ENCODE measurements at regions of chr20 and their contacts with region 1.

Region 1: DNA sequence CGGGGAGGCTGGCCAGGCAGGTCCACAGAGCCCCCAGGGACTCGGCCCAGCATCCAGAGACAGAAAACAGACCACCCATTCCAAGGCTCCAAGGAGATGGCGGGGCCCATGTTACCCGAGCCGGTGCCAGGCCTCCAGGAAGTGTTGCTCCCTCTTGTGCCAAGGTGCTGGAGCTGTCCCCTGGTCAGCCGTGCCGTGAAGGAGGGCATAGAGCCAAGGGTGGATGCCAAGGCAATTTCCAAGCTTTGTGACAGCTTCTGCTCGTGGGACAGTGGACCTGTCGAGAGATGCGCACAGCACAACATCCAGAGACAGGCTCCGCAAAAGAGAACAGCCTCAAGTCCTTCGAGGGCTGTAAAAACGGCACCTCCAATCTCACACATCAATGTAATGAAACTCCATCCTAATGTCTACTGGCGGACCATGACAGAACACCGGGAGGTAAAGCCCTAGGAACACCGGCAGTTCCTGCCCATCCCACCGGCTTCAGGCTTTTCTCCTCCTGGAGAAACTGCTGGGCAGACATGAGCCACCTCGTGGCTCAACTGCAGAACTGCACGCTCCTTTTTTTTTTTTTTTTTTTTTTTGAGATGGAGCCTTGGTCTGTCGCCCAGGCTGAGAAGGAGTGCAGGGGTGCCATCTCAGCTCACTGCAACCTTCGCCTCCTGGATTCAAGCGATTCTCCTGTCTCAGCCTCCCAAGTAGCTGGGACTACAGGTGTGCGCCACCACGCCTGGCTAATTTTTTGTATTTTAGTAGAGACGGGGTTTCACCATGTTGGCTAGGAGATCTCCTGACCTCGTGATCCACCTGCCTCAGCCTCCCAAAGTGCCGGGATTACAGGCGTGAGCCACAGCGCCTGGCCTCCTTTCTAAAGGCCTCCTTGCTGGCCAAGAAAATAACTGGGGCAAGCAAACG is 30.9 kb upstream of the AVP start:
- DNase-seq: peak in 1 of 2 donors; percentile 69
- ATAC-seq: peak; percentile 60 to 70 (median 64)
- H3K4me3 ChIP-seq: no peak overlapping the region
- H3K27ac ChIP-seq: no peak overlapping the region
- H3K4me1 ChIP-seq: peaks cover 4% of the 10 kb centered on the region
- H3K27me3 ChIP-seq: no peaks in the 10 kb centered on the region
- CTCF ChIP-seq: peak; percentile 81

Region 2: DNA sequence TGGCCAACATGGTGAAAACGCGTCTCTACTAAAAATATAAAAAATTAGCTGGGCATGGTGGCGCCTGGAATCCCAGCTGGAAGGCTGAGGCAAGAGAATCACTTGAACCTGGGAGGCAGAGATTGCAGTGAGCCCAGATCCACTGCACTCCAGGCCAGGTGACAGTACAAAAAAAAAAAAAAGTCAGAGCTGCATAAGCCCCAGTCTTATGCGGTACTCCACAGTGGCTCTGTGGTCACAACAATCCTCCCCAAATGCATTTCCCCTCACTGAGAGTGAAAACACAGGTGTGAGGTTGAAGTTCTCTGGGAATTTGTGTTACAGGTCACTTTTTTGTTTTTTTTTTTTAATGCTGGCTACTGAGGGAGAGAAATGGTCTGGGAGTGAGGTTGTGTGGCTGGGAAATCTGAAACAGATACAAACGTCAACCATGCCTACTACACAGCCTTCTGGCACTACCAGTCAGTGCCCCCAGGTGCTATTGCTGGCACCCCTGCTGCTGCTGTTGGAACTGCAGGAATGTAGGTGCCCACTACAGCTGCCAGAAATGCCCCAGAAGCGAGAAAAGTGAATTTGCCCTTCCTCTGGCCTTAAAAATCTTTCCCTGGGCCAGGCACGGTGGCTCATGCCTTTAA is 63.9 kb before region 1 on chr20:
- intact Hi-C with region 1: loop called (anchors 1 to 5 kb)
- DNase-seq: no peak
- ATAC-seq: no peak
- H3K4me3 ChIP-seq: no peak overlapping the region
- H3K27ac ChIP-seq: no peak overlapping the region
- H3K4me1 ChIP-seq: peaks cover 7% of the 10 kb centered on the region
- H3K27me3 ChIP-seq: no peaks in the 10 kb centered on the region
- CTCF ChIP-seq: no peak

Region 3: GRCh38 chr20:3209257-3209945 is 94.0 kb after region 1 on chr20 and contains the start of gene ITPA:
- intact Hi-C with region 1: loop called in 1 of 2 experiments (anchors 1 kb)
- DNase-seq: peak; percentile 45 to 70
- ATAC-seq: peak; percentile 42 to 75 (median 60)
- H3K4me3 ChIP-seq: peak within 1 kb of the TSS; percentile 97
- H3K27ac ChIP-seq: peak within 1 kb of the TSS; percentile 84
- H3K4me1 ChIP-seq: peaks cover 9% of the 10 kb centered on the region
- H3K27me3 ChIP-seq: peaks cover 0 to 2% (median 0%) of the 10 kb centered on the region in 3 donors
- CTCF ChIP-seq: no peak
- total RNA-seq, gene ITPA: 19.6 to 26.0 (median 23.9) TPM

Region 4: GRCh38 chr20:3248167-3248992 is 132.9 kb after region 1 on chr20:
- intact Hi-C with region 1: loop called in 1 of 2 experiments (anchors 5 kb)
- DNase-seq: peak; percentile 50 to 78
- ATAC-seq: peak; percentile 62 to 88 (median 82)
- H3K4me3 ChIP-seq: peak overlapping the region; percentile 47
- H3K27ac ChIP-seq: no peak overlapping the region
- H3K4me1 ChIP-seq: peaks cover 16% of the 10 kb centered on the region
- H3K27me3 ChIP-seq: no peaks in the 10 kb centered on the region
- CTCF ChIP-seq: peak; percentile 17

Region 5: GRCh38 chr20:3312940-3313682 is 197.7 kb after region 1 on chr20:
- intact Hi-C with region 1: loop called in 1 of 2 experiments (anchors 5 kb)
- DNase-seq: no peak
- ATAC-seq: peak; percentile 58 to 80 (median 69)
- H3K4me3 ChIP-seq: no peak overlapping the region
- H3K27ac ChIP-seq: peak overlapping the region; percentile 73
- H3K4me1 ChIP-seq: peaks cover 55% of the 10 kb centered on the region
- H3K27me3 ChIP-seq: no peaks in the 10 kb centered on the region
- CTCF ChIP-seq: no peak